Psoas muscle (tissue), 8 donors: ENCODE measurements at regions of chr2 and their contacts with region 1.

Region 1: DNA sequence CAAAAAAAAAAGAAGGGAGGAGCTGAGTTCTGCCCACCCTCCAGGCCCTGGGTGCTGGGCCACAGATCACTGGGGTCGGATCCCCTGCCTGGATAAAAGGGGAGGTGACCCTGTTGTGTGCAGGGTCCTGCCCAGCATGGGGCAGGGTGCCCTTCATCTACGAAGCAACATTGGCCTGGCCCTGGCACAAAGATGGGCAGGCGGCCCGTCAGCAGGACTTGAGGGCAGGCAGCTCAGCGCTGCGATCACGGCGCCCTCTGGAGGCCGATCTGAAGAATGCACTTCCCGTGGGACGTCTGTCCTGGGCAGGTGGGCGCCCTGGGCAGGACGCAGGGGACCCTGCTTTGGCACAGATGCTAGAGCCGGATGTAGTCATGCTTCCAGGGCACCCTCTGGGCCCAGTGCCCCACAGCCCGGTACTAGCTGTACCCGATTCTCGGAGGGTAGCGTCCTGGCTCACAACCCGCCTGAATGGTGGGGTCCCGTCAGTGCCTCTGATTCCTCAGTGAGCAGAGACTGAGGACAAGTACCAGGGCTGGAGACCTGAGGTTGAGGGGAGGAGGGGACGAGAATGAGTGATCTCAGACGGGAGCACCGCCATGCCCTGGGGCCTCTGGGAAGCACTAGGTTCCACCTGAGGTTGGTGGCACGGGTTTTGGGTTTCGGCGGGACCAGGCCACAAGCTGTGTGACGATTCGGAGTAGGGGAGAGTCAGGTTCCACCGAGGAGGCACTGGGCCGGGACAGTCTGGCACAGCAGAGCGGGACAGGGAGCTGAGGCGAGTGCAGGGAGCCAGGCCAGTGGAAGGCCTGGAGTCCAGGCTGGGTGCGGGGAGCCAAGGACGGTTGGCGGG is 18.0 kb downstream of the ARID5A start:
- DNase-seq: peak; percentile 74 to 91
- ATAC-seq: peak; percentile 56 to 82 (median 74)
- H3K4me3 ChIP-seq: peak overlapping the region; percentile 55
- H3K27ac ChIP-seq: peak overlapping the region; percentile 91
- H3K4me1 ChIP-seq: peaks cover 17% of the 10 kb centered on the region
- H3K27me3 ChIP-seq: no peaks in the 10 kb centered on the region
- CTCF ChIP-seq: peak; percentile 97

Region 2: GRCh38 chr2:96413323-96413722 is 141.2 kb before region 1 on chr2:
- intact Hi-C with region 1: loop called in 1 of 2 experiments (anchors 1 kb)
- DNase-seq: peak in 1 of 2 donors; percentile 30
- ATAC-seq: peak; percentile 90 to 94 (median 91)
- H3K4me3 ChIP-seq: peak overlapping the region; percentile 69
- H3K27ac ChIP-seq: peak overlapping the region; percentile 75
- H3K4me1 ChIP-seq: peaks cover 12% of the 10 kb centered on the region
- H3K27me3 ChIP-seq: no peaks in the 10 kb centered on the region
- CTCF ChIP-seq: no peak

Region 3: DNA sequence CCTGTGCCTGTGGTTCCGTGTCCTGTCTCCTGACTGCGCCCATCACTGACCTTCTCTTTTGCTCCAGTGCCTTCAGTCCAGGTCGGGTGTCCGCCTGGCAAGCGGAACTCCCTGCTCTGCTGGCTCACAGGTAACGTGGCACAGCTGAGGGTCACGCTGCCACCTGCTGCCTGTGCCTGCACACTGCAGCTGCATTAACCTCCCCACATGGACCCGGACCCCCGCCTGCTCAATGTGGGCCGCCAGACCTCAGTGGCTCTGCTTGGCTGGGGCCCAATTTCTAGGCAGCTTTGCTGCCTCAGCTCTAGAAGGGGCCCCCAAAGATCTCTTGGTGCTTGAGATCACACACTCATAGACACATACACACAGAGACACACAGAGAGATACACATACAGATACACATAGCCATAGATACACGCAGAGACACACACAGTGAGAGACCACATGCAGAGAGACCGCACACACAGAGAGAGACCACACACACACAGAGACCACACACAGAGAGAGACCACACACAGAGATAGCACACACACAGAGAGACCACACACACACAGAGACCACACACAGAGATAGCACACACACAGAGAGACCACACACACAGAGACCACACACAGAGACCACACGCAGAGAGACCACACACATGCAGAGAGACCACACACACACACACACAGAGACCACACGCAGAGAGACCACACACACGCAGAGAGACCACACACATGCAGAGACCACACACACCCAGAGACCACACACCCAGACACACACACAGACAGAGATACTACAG is 246.7 kb after region 1 on chr2:
- intact Hi-C with region 1: loop called in 1 of 2 experiments (anchors 2 kb)
- DNase-seq: peak; percentile 77 to 92
- ATAC-seq: peak; percentile 97 to 99 (median 98)
- H3K4me3 ChIP-seq: no peak overlapping the region
- H3K27ac ChIP-seq: peak overlapping the region; percentile 80
- H3K4me1 ChIP-seq: peaks cover 8% of the 10 kb centered on the region
- H3K27me3 ChIP-seq: no peaks in the 10 kb centered on the region
- CTCF ChIP-seq: peak; percentile 84